PC-9 (cell line): ENCODE measurements at regions of chr1 and their contacts with region 1.

Region 1: GRCh38 chr1:153032677-153033308 is 1.8 kb downstream of the SPRR1B start:
- DNase-seq: peak; percentile 71 to 96
- H3K4me3 ChIP-seq: no peak overlapping the region
- H3K27ac ChIP-seq: peak overlapping the region; percentile 48; the same call in 1 of the 2 replicates
- H3K4me1 ChIP-seq: peaks cover 37% of the 10 kb centered on the region
- H3K27me3 ChIP-seq: no peaks in the 10 kb centered on the region
- CTCF ChIP-seq: peak; percentile 64

Region 2: DNA sequence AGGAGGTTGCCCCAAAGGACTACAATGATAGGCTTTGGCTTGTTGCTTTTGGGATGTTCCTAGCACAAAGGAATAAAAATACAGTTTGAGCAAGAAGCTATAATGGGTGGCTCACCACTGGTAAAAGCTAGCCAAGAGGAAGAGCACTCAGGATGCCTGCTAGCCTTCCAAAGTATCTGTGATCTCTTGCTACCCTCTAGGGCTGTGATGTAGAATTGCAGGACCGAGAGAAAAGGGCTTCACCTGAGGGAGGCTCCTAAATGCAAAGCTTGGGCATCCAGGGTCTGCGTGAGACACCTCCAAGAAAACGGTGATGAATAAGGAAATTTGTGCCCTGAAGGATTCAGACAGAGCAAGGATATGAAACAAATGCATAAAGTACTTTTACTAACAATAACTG is 106.7 kb before region 1 on chr1:
- CTCF ChIA-PET with region 1: interaction called, 4 read pairs
- POLR2A ChIA-PET with region 1: no interaction called
- intact Hi-C with region 1: loop called (anchors 2 kb)
- DNase-seq: peak in 1 of 2 experiments; percentile 54
- H3K4me3 ChIP-seq: no peak overlapping the region
- H3K27ac ChIP-seq: no peak overlapping the region
- H3K4me1 ChIP-seq: no peaks in the 10 kb centered on the region; the same call in 1 of the 2 replicates
- H3K27me3 ChIP-seq: no peaks in the 10 kb centered on the region
- CTCF ChIP-seq: peak; percentile 77

Region 3: GRCh38 chr1:152954434-152954833 is 78.4 kb before region 1 on chr1:
- CTCF ChIA-PET with region 1: no interaction called
- POLR2A ChIA-PET with region 1: no interaction called
- intact Hi-C with region 1: loop called (anchors 5 kb)
- DNase-seq: peak; percentile 31 to 93
- H3K4me3 ChIP-seq: 0 out of 2 replicates have a peak overlapping the region, but pooled peaks have one; percentile 18
- H3K27ac ChIP-seq: peak overlapping the region; percentile 67
- H3K4me1 ChIP-seq: peaks cover 35% of the 10 kb centered on the region
- H3K27me3 ChIP-seq: no peaks in the 10 kb centered on the region
- CTCF ChIP-seq: no peak

Region 4: DNA sequence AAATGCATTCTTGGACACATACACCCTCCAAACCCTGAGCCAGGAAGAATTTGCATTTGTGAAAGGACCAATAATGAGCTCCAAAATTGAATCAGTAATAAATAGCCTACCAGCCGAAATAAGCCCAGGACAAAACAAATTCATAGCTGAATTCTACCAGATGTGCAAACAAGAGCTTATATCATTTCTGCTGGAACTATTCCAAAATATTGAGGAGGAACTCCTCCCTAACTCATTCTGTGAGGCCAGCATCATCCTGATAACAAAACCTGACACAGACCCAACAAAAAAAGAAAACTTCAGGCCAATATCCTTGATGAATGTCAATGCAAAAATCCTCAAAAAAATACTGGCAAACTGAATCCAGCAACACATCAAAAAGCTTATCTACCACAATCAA is 54.9 kb after region 1 on chr1:
- CTCF ChIA-PET with region 1: no interaction called
- POLR2A ChIA-PET with region 1: no interaction called
- intact Hi-C with region 1: no loop called
- DNase-seq: no peak
- H3K4me3 ChIP-seq: no peak overlapping the region
- H3K27ac ChIP-seq: no peak overlapping the region
- H3K4me1 ChIP-seq: no peaks in the 10 kb centered on the region
- H3K27me3 ChIP-seq: no peaks in the 10 kb centered on the region
- CTCF ChIP-seq: no peak

Region 5: GRCh38 chr1:153192697-153193096 is 159.9 kb after region 1 on chr1:
- CTCF ChIA-PET with region 1: no interaction called
- POLR2A ChIA-PET with region 1: no interaction called
- intact Hi-C with region 1: loop called (anchors 2 kb)
- DNase-seq: peak in 1 of 2 experiments; percentile 24
- H3K4me3 ChIP-seq: no peak overlapping the region
- H3K27ac ChIP-seq: no peak overlapping the region
- H3K4me1 ChIP-seq: no peaks in the 10 kb centered on the region
- H3K27me3 ChIP-seq: peaks cover 15% of the 10 kb centered on the region; the same call in 1 of the 2 replicates
- CTCF ChIP-seq: peak; percentile 84

Region 6: GRCh38 chr1:153977250-153978240 is 944.8 kb after region 1 on chr1 and contains the start of gene JTB:
- CTCF ChIA-PET with region 1: no interaction called
- POLR2A ChIA-PET with region 1: no interaction called
- intact Hi-C with region 1: no loop called
- DNase-seq: peak; percentile 68 to 73
- H3K4me3 ChIP-seq: peak within 1 kb of the TSS; percentile 91
- H3K27ac ChIP-seq: peak within 1 kb of the TSS; percentile 58
- H3K4me1 ChIP-seq: peaks cover 15% of the 10 kb centered on the region; the same call in 1 of the 2 replicates
- H3K27me3 ChIP-seq: no peaks in the 10 kb centered on the region
- CTCF ChIP-seq: no peak
- total RNA-seq, gene JTB: 106 and 108 TPM in 2 replicates